ENCODE measurements at regions of chrX and their contacts with region 1.

Region 1: GRCh38 chrX:24054182-24055042 is at the start of gene EIF2S3:
- DNase-seq: peak; percentile 89
- ATAC-seq: peak; percentile 98
- total RNA-seq, gene EIF2S3: 76.8 TPM

Region 2: DNA sequence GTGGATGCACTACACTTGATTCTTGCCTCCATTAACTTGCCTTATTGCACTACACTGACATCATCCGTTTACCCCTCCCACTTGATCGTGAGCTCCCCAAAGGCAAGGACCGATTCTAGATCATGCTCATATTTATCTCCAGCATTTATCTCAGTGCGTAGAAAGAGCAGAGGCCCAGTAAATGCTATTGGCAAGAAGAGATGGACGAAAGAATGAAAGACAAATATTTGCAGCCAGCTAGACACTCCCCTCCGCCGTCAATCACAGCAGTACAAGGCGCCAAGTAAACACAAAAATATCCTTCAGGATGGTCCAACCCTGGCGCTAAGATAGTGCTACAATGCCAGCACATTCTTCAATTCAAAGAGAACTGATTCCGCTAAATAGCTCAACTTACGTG is 940.3 kb before region 1 on chrX:
- intact Hi-C with region 1: no loop called
- DNase-seq: no peak
- ATAC-seq: no peak

Region 3: GRCh38 chrX:23797371-23798128 is 256.9 kb before region 1 on chrX:
- intact Hi-C with region 1: no loop called
- DNase-seq: no peak
- ATAC-seq: no peak

Region 4: GRCh38 chrX:23907498-23908218 is 146.8 kb before region 1 on chrX and contains the starts of genes APOO and CXorf58:
- intact Hi-C with region 1: loop called (anchors 10 kb)
- DNase-seq: peak; percentile 96
- ATAC-seq: peak; percentile 98
- total RNA-seq, gene APOO: 105 TPM
- total RNA-seq, gene CXorf58: not detected

Region 5: GRCh38 chrX:24321741-24322395 is 267.5 kb after region 1 on chrX:
- intact Hi-C with region 1: no loop called
- DNase-seq: no peak
- ATAC-seq: no peak

Region 6: GRCh38 chrX:24594501-24594900 is 540.1 kb after region 1 on chrX:
- intact Hi-C with region 1: no loop called
- DNase-seq: no peak
- ATAC-seq: no peak

Measured in left ventricle myocardium superior (tissue), 1 donor.